ENCODE measurements at regions of chr1 and their contacts with region 1.

Region 1: DNA sequence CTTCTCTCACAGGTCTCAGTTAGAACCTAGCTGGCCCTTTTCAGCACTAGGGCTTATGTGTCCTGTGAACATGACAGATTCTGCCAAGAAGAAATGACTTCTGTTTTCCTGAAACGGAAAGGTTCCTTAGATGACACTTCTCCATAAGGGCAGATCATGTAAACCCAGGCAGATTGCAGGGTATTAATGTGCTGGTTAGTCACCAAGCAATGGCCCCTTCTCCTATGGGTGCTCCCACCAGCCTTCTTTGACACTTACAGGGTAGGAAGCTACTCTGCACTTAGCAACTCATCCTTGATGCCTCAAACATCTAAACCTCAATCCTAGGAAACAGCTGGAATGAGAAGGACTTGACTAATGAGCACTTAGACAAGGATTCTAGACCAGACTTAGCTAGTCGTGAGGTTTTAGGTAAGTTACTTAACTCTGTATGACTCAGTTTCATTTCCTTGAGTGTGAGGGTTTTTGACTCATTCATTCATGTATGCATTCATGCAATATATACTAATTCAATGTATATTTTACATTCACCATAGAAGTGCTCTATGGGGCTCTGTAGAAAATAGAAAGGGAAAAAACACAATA is 74.1 kb upstream of the PLXNA2 start:
- DNase-seq: no peak
- H3K4me3 Mint-ChIP-seq: no peak overlapping the region
- H3K27ac Mint-ChIP-seq: no peak overlapping the region
- H3K4me1 Mint-ChIP-seq: no peaks in the 10 kb centered on the region
- H3K27me3 Mint-ChIP-seq: peaks cover 78% of the 10 kb centered on the region
- CTCF ChIP-seq: no peak

Region 2: GRCh38 chr1:208357644-208358507 is 39.6 kb after region 1 on chr1:
- CTCF ChIA-PET with region 1: no interaction called
- intact Hi-C with region 1: no loop called
- DNase-seq: no peak
- H3K4me3 Mint-ChIP-seq: no peak overlapping the region
- H3K27ac Mint-ChIP-seq: no peak overlapping the region
- H3K4me1 Mint-ChIP-seq: no peaks in the 10 kb centered on the region
- H3K27me3 Mint-ChIP-seq: peaks cover 37% of the 10 kb centered on the region
- CTCF ChIP-seq: no peak

Region 3: DNA sequence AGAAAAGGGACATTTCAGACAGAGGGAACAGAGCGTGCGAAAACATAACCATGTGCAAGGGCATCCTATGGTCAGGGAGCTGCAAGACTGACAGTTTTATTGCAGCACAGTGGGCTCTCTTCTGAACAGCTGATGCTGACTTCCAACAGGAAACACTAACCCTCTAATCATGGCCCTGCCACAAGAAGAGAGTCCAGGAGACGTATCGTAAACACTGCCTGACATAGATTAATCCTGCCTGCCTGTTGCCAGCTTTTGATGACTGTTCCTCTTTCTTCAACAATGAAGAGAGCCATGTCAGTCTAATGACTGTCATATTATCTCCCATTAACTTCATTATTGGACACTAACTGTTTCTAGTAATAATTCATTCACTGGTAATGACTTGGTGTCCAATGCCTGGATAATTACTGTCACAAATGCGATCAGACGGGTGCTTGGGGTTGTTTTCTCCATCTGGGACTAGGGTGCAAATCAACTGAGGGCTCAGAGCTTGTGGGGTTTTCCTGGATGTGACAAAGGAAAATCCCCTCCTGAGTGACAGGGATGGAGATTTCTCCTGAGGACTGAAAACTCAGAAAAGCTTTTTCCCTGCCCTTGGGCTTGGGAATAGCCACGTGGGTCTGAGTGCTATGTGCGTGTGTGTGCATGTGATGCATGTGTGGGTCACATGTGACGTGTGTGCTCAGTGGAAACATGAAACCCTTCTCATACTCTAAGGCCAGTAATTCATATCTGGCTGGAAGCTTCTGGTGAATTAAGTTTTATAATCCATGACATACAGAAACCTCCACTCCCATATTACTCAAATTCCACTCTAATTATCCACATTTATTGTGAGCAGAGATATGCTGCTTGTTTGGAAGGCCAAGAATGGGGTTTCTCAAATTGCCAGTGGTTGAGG is 69.9 kb after region 1 on chr1:
- CTCF ChIA-PET with region 1: interaction called, 12 read pairs
- intact Hi-C with region 1: no loop called
- DNase-seq: no peak
- H3K4me3 Mint-ChIP-seq: no peak overlapping the region
- H3K27ac Mint-ChIP-seq: no peak overlapping the region
- H3K4me1 Mint-ChIP-seq: no peaks in the 10 kb centered on the region
- H3K27me3 Mint-ChIP-seq: peaks cover 36% of the 10 kb centered on the region
- CTCF ChIP-seq: no peak

Region 4: DNA sequence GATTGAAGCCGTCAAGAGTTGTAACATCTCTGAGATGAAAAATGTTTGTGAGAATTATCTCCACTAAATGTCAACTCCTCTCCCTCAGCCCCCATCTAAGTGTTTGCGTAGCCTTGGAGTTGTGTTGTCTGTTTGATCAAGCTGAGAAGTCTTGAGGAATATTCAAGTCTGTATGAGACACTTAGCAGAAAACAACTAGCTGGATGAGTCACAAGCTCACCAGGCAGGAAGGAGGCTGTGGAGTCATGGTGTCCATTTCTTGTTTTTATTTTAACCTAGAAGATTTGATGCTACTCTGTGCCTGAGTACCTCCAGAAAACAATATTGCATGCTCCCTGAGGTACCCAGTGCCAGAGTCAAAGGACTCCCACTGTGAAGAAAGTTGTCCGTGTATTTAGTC is 137.6 kb after region 1 on chr1:
- CTCF ChIA-PET with region 1: no interaction called
- intact Hi-C with region 1: no loop called
- DNase-seq: no peak
- H3K4me3 Mint-ChIP-seq: no peak overlapping the region
- H3K27ac Mint-ChIP-seq: no peak overlapping the region
- H3K4me1 Mint-ChIP-seq: no peaks in the 10 kb centered on the region
- H3K27me3 Mint-ChIP-seq: peaks cover 7% of the 10 kb centered on the region
- CTCF ChIP-seq: no peak

Measured in Calu3 (cell line).